MCF 10A (cell line): ENCODE measurements at regions of chr4 and their contacts with region 1.

Region 1: DNA sequence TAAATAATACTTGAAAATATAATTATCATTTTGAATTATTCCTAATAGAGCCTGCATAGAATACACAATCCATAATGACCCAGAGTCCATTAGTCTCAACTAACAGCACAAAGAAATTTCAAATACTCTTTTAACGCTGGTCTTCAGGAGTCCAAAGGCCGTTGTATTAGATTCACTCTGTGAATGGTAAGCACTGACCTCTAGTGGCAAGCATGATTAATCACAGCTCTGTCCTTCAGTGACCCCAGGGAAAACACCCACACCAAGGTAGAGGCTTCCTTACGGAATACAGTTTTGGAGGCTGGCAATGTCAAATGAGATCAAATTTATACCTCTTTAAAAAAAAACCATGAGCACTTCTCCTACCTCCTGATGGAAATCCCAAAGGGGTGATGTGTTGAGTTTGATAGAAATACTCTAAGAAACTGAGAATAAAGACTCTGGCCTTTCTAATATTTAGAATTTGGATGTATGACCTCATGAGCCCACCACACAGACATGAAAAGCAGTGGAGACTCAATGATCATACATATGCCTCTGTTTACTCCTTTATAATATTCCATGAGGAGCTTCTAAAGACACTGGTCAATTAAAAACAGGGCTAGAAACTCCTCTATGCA is 147.2 kb upstream of the DKK2 start:
- DNase-seq: peak; percentile 78
- H3K4me3 Mint-ChIP-seq: no peak overlapping the region
- H3K27ac Mint-ChIP-seq: no peak overlapping the region
- H3K4me1 Mint-ChIP-seq: no peaks in the 10 kb centered on the region
- H3K27me3 Mint-ChIP-seq: no peaks in the 10 kb centered on the region
- CTCF ChIP-seq: peak; percentile 79

Region 2: GRCh38 chr4:106149026-106149425 is 1034.2 kb before region 1 on chr4:
- CTCF ChIA-PET with region 1: no interaction called
- POLR2A ChIA-PET with region 1: no interaction called
- intact Hi-C with region 1: no loop called
- DNase-seq: no peak
- H3K4me3 Mint-ChIP-seq: no peak overlapping the region
- H3K27ac Mint-ChIP-seq: no peak overlapping the region
- H3K4me1 Mint-ChIP-seq: no peaks in the 10 kb centered on the region
- H3K27me3 Mint-ChIP-seq: no peaks in the 10 kb centered on the region
- CTCF ChIP-seq: no peak

Region 3: GRCh38 chr4:106266201-106266600 is 917.1 kb before region 1 on chr4:
- CTCF ChIA-PET with region 1: no interaction called
- POLR2A ChIA-PET with region 1: no interaction called
- intact Hi-C with region 1: loop called (anchors 10 kb)
- DNase-seq: peak; percentile 52
- H3K4me3 Mint-ChIP-seq: no peak overlapping the region
- H3K27ac Mint-ChIP-seq: no peak overlapping the region
- H3K4me1 Mint-ChIP-seq: peaks cover 13% of the 10 kb centered on the region
- H3K27me3 Mint-ChIP-seq: no peaks in the 10 kb centered on the region
- CTCF ChIP-seq: peak; percentile 58

Region 4: DNA sequence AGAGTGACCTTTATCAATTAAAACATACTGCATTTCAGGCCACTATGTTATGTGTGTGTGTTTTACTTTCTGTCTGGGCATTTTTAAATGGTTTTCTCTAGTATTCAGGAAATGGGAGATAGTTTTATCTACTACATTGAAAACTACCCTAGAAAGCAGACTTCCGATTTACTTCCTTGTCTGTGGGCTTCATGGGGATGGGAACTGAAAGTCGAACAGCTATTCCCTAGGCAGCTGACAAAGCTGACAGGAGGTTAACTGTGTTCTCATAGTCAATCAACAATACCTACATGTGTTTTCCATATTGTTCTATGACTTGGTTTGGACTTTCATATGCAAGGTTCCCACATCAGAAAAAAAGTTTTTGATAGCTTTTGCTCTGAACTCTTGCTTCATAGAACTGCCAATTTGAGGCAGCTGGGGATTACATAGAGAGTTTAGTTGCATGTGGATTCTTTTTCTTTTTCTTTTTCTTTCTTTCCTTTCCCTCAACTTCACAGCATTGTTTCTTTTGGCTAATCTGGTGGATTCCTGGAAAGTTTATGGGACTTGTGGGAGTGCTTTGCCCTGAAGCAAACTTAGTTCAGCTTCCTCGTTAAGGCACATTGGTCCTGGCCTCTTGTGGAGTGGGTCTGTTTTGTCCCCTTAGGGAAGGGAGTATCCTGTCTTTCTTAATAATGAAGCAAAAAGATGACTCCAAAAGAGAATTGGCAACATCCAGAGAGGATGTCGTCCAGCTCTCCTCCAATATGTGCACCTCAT is 487.6 kb before region 1 on chr4:
- CTCF ChIA-PET with region 1: no interaction called
- POLR2A ChIA-PET with region 1: no interaction called
- intact Hi-C with region 1: no loop called
- DNase-seq: no peak
- H3K4me3 Mint-ChIP-seq: no peak overlapping the region
- H3K27ac Mint-ChIP-seq: no peak overlapping the region
- H3K4me1 Mint-ChIP-seq: peaks cover 11% of the 10 kb centered on the region
- H3K27me3 Mint-ChIP-seq: no peaks in the 10 kb centered on the region
- CTCF ChIP-seq: no peak

Region 5: GRCh38 chr4:106818764-106819163 is 364.5 kb before region 1 on chr4:
- CTCF ChIA-PET with region 1: interaction called, 7 read pairs
- POLR2A ChIA-PET with region 1: no interaction called
- intact Hi-C with region 1: loop called (anchors 10 kb)
- DNase-seq: no peak
- H3K4me3 Mint-ChIP-seq: no peak overlapping the region
- H3K27ac Mint-ChIP-seq: no peak overlapping the region
- H3K4me1 Mint-ChIP-seq: no peaks in the 10 kb centered on the region
- H3K27me3 Mint-ChIP-seq: no peaks in the 10 kb centered on the region
- CTCF ChIP-seq: peak; percentile 24

Region 6: GRCh38 chr4:107037199-107037584 is 146.1 kb before region 1 on chr4:
- CTCF ChIA-PET with region 1: interaction called, 5 read pairs
- POLR2A ChIA-PET with region 1: no interaction called
- intact Hi-C with region 1: loop called (anchors 2 kb)
- DNase-seq: peak; percentile 48
- H3K4me3 Mint-ChIP-seq: peak overlapping the region; percentile 91
- H3K27ac Mint-ChIP-seq: no peak overlapping the region
- H3K4me1 Mint-ChIP-seq: peaks cover 24% of the 10 kb centered on the region
- H3K27me3 Mint-ChIP-seq: peaks cover 49% of the 10 kb centered on the region
- CTCF ChIP-seq: peak; percentile 25

Region 7: GRCh38 chr4:107094332-107094731 is 88.9 kb before region 1 on chr4:
- CTCF ChIA-PET with region 1: interaction called, 46 read pairs
- POLR2A ChIA-PET with region 1: interaction called, 5 read pairs
- intact Hi-C with region 1: loop called (anchors 1 kb)
- DNase-seq: peak; percentile 45
- H3K4me3 Mint-ChIP-seq: no peak overlapping the region
- H3K27ac Mint-ChIP-seq: no peak overlapping the region
- H3K4me1 Mint-ChIP-seq: no peaks in the 10 kb centered on the region
- H3K27me3 Mint-ChIP-seq: no peaks in the 10 kb centered on the region
- CTCF ChIP-seq: peak; percentile 58

Region 8: DNA sequence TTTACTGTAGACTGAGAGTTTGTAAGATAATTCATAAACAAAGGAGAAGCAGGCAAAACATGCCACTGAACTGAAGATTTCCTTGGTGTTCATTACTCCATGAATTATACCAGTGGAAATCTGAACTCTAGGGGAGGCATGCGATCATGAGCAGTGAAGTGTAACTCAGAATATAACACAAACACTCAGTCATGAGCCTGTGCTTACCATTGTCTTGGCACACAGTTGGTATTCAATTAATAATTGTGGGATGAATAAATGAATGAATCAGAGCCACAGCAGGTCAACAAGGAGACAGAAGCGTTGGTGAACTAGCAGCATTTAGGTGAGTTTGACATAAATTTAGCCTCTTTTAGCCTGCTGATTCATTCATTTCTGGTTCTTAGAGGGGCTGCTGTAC is 116.4 kb after region 1 on chr4:
- CTCF ChIA-PET with region 1: no interaction called
- POLR2A ChIA-PET with region 1: no interaction called
- intact Hi-C with region 1: no loop called
- DNase-seq: no peak
- H3K4me3 Mint-ChIP-seq: no peak overlapping the region
- H3K27ac Mint-ChIP-seq: no peak overlapping the region
- H3K4me1 Mint-ChIP-seq: no peaks in the 10 kb centered on the region
- H3K27me3 Mint-ChIP-seq: no peaks in the 10 kb centered on the region
- CTCF ChIP-seq: no peak

Region 9: GRCh38 chr4:107519053-107519452 is 335.8 kb after region 1 on chr4:
- CTCF ChIA-PET with region 1: interaction called, 9 read pairs
- POLR2A ChIA-PET with region 1: no interaction called
- intact Hi-C with region 1: loop called (anchors 10 kb)
- DNase-seq: peak; percentile 56
- H3K4me3 Mint-ChIP-seq: no peak overlapping the region
- H3K27ac Mint-ChIP-seq: no peak overlapping the region
- H3K4me1 Mint-ChIP-seq: no peaks in the 10 kb centered on the region
- H3K27me3 Mint-ChIP-seq: no peaks in the 10 kb centered on the region
- CTCF ChIP-seq: peak; percentile 50

Region 10: GRCh38 chr4:107736924-107737448 is 553.7 kb after region 1 on chr4:
- CTCF ChIA-PET with region 1: no interaction called
- POLR2A ChIA-PET with region 1: no interaction called
- intact Hi-C with region 1: loop called (anchors 10 kb)
- DNase-seq: peak; percentile 57
- H3K4me3 Mint-ChIP-seq: no peak overlapping the region
- H3K27ac Mint-ChIP-seq: no peak overlapping the region
- H3K4me1 Mint-ChIP-seq: no peaks in the 10 kb centered on the region
- H3K27me3 Mint-ChIP-seq: no peaks in the 10 kb centered on the region
- CTCF ChIP-seq: peak; percentile 77